HEK293 (cell line): ENCODE measurements at regions of chr17 and their contacts with region 1.

Region 1: DNA sequence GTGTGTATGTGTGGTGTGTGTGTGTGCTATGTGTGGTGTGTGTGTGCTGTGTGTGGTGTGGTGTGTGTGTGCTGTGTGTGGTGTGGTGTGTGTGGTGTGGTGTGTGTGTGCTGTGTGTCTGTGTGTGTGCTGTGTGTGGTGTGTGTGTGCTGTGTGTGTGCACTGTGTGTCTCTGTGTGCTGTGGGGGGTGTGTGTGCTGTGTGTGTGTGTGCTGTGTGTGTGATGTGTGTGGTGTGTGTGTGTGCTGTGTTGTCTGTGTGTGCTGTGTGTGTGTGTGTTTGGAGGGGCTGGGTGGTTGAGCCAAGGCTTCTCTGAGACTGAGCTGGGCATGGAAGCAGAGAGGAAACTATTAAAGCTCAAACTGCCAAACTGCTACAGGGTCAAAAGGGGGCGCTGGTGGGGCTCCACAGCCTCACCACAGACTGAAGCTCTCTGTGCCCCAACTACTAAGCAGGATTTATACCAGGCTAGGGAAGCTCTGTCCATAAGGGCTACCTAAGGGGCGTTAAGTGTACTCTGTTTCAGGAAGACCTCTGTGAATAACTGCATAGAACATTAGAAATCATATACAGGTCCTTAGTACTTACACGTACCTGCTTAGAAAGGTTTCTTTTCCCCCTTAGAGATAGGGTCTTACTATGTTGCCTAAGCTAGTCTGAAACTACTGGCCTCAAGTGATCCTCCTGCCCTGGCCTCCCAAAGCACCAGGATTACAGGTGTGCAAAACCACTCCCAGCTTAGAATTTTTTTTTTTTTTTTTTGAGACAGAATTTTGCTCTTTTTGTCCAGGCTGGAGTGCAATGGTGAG is 27.8 kb upstream of the GHDC start:
- H3K4me3 ChIP-seq: no peak overlapping the region
- H3K27ac ChIP-seq: no peak overlapping the region
- H3K4me1 ChIP-seq: no peaks in the 10 kb centered on the region; the same call in 1 of the 2 replicates
- CTCF ChIP-seq: peak; percentile 28; the same call in 1 of the 2 replicates

Region 2: GRCh38 chr17:42171831-42172230 is 50.3 kb before region 1 on chr17:
- CTCF ChIA-PET with region 1: no interaction called
- POLR2A ChIA-PET with region 1: no interaction called
- H3K4me3 ChIP-seq: no peak overlapping the region
- H3K27ac ChIP-seq: no peak overlapping the region
- H3K4me1 ChIP-seq: no peaks in the 10 kb centered on the region
- CTCF ChIP-seq: no peak

Region 3: GRCh38 chr17:42243493-42243996 is 21.4 kb after region 1 on chr17:
- CTCF ChIA-PET with region 1: interaction called, 24 read pairs
- POLR2A ChIA-PET with region 1: interaction called, 4 read pairs
- H3K4me3 ChIP-seq: no peak overlapping the region
- H3K27ac ChIP-seq: no peak overlapping the region
- H3K4me1 ChIP-seq: peaks cover 3% of the 10 kb centered on the region; the same call in 1 of the 2 replicates
- CTCF ChIP-seq: no peak

Region 4: DNA sequence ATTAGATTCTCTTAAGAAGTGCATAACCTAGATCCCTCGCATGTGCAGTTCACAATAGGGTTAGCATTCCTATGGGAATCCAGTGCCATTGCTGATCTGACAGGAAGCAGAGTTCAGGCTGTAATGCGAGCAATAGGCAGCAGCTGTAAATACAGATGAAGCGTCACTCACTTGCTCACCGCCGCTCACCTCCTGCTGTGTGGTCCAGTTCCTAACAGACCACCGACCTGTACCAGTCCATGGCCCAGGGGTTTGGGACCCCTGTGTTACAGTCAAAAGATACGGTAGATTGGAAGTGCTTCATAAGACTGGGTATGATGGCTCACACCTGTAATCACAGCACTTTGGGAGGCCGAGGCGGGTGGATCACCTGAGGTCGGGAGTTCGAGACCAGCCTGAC is 69.0 kb after region 1 on chr17:
- CTCF ChIA-PET with region 1: interaction called, 11 read pairs
- POLR2A ChIA-PET with region 1: no interaction called
- H3K4me3 ChIP-seq: no peak overlapping the region
- H3K27ac ChIP-seq: no peak overlapping the region
- H3K4me1 ChIP-seq: no peaks in the 10 kb centered on the region
- CTCF ChIP-seq: no peak

Region 5: DNA sequence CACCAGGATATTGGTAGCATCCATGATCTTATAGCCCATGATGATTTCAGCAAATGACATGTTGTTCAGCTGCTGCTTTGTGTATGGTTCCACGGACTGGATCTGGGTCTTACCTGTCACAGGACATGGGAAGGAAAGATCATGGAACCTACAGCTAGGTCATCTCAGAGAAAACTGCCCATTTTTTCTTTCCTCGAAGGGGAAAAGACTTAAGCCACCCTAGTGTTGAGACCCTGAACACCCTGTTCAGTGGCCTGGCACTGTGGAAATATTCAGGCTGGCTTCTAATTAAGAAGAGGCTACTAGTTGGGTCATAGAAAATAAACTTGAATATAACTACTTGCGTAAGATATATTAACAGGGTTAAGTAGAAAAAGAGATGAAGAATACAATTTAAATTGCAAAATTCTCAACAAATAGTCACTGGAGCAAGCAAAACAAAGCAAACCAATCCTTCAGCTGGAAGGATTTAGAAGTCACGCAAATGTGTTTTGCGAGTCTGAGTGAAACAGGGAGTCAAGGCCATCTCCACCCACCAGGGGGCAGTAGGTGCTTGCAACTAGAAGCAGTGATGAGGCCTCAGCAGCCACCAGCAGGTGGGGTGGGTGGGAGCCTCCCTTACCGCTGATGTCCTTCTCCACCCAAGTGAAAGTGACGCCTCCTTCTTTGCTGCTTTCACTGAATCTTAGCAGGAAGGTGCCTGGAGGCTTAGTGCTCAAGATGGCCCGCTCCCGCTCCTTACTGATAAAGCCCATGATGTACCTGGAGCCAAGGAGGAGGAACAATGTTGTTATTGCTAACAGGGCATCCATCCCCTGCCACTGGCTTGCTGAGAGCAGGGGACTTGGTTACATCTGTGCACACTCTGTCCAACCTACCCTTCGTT is 100.5 kb after region 1 on chr17:
- CTCF ChIA-PET with region 1: interaction called, 26 read pairs
- POLR2A ChIA-PET with region 1: no interaction called
- H3K4me3 ChIP-seq: no peak overlapping the region
- H3K27ac ChIP-seq: no peak overlapping the region
- H3K4me1 ChIP-seq: no peaks in the 10 kb centered on the region
- CTCF ChIP-seq: peak; percentile 100

Region 6: GRCh38 chr17:42438600-42439567 is 216.7 kb after region 1 on chr17:
- CTCF ChIA-PET with region 1: no interaction called
- POLR2A ChIA-PET with region 1: no interaction called
- H3K4me3 ChIP-seq: no peak overlapping the region
- H3K27ac ChIP-seq: no peak overlapping the region
- H3K4me1 ChIP-seq: peaks cover 2% of the 10 kb centered on the region; the same call in 1 of the 2 replicates
- CTCF ChIP-seq: no peak; the same call in 1 of the 2 replicates

Region 7: DNA sequence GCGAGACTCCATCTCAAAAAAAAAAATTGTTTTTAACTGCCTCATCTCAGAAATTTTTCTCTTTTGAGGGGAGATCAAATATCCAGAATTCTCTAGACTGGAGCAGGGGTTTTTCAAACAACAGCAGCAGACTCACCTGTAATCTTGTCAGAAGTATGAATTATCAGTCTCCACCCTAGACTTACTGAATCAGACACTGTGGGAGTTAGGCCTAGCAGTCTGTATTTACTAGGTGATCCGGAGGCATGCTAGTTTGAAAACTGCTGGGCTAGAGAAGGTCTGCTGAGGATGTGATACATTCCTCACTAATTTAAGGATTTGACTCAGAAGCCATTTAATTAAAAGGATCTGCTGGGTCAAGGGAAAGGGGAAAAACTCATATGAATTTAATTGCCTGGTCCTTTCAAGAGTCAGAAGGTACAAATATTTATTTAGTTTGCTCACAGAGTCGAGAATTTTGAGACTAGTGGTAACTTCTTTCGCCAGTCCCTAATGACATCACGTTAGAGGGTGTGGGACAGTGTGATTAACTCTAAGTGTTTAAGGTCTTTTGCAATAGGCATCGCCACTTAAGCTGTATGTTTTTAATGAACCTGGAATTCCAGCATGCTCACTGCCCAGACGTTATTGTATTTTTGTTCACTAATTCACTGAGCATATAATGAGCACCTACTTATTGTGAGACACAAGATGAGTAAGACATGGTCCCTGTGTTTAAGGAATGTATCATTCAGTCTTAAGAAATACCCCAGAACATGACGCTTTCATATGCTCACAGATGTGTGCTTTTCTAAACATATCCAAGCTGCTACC is 250.8 kb after region 1 on chr17:
- CTCF ChIA-PET with region 1: no interaction called
- POLR2A ChIA-PET with region 1: no interaction called
- H3K4me3 ChIP-seq: no peak overlapping the region
- H3K27ac ChIP-seq: no peak overlapping the region
- H3K4me1 ChIP-seq: no peaks in the 10 kb centered on the region
- CTCF ChIP-seq: no peak

Region 8: DNA sequence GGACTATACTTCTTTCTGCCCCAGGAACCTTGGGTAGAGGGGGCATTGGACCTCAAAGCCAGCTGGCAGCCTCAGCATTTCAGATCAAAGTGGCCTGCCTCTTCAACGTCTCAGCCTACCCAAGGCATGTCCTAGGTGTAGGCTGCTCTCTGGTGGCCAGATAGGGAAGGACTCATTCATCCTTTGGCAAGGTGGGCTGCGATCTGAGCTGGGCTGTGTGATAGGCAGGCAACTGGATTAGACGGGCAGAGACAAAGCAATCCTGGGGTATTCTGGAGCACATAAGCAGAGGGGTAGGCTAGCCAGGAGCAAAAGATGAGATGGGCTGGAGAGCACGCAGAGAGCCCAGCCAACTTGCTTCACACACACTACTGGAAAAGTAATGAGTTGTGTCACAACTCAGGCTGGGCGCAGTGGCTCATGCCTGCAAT is 305.1 kb after region 1 on chr17:
- CTCF ChIA-PET with region 1: interaction called, 12 read pairs
- POLR2A ChIA-PET with region 1: no interaction called
- H3K4me3 ChIP-seq: no peak overlapping the region
- H3K27ac ChIP-seq: no peak overlapping the region
- H3K4me1 ChIP-seq: peaks cover 15% of the 10 kb centered on the region
- CTCF ChIP-seq: peak; percentile 87